ENCODE measurements at regions of chr15 and their contacts with region 1.

Region 1: GRCh38 chr15:67065444-67066093 is at the start of gene SMAD3:
- DNase-seq: peak; percentile 93
- ATAC-seq: peak; percentile 88 to 89
- total RNA-seq, gene SMAD3: 24.0 to 37.5 TPM

Region 2: DNA sequence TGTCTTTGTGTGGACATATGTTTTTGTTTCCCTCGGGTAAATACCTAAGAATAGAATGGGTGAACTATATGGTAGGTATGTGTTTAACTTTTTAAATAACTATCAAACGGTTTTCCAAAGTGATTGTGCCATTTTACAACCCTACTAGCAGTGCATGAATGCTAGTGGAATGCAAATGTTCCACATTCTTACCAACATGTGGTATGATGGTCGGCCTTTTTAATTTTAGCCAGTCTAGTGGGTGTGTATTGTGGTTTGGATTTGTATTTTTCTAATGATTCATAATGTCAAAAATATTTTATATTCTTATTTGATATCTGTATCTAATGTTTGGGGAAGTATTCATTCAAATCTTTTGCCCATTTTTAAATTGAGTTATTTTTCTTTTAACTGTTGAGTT is 68.4 kb before region 1 on chr15:
- intact Hi-C with region 1: no loop called
- DNase-seq: no peak
- ATAC-seq: no peak

Region 3: GRCh38 chr15:67188551-67189218 is 123.1 kb after region 1 on chr15:
- intact Hi-C with region 1: loop called (anchors 5 to 10 kb)
- DNase-seq: no peak
- ATAC-seq: peak in 1 of 2 donors; percentile 5

Region 4: GRCh38 chr15:67254238-67255175 is 188.9 kb after region 1 on chr15 and contains the starts of genes AAGAB and IQCH:
- intact Hi-C with region 1: loop called in 1 of 2 experiments (anchors 10 kb)
- DNase-seq: peak; percentile 99
- ATAC-seq: peak; percentile 99 to 100
- total RNA-seq, gene AAGAB: 18.0 to 26.9 TPM
- total RNA-seq, gene IQCH: 0.53 to 1.1 TPM